ENCODE measurements at regions of chr2 and their contacts with region 1.

Region 1: GRCh38 chr2:148989882-148990493 is 48.5 kb upstream of the LYPD6B start:
- DNase-seq: peak; percentile 65
- H3K4me3 Mint-ChIP-seq: no peak overlapping the region
- H3K27ac Mint-ChIP-seq: no peak overlapping the region
- H3K4me1 Mint-ChIP-seq: peaks cover 5% of the 10 kb centered on the region
- H3K27me3 Mint-ChIP-seq: peaks cover 26% of the 10 kb centered on the region
- CTCF ChIP-seq: peak; percentile 52

Region 2: DNA sequence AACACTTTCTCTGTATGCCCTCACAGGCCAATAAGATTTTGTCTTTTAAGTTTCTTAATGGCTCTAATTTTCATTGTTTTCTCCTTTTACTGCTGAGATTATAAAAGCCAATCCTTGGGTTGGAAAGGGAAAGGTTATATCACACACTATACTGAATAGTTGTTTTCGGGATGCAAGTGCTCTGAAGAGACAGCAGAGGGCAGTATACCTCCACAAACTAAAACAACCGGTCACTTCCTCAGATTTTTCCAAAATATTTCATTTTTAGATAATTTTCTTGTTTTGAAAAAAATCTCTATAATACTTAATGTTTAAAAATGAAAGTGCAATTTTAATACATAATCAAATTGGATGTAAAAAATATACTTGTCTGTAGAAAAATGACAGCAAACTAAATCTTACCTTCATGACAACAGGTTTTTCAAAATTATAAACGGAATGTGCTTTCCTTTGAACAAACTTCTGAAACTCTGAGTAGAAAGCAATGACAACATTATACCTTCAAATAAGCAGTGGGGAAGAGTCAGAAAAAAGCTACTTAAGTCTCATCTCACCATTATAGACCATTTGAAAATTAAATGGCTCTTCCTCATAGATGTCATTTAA is 1052.1 kb before region 1 on chr2:
- CTCF ChIA-PET with region 1: no interaction called
- intact Hi-C with region 1: loop called (anchors 2 kb)
- DNase-seq: no peak
- H3K4me3 Mint-ChIP-seq: no peak overlapping the region
- H3K27ac Mint-ChIP-seq: no peak overlapping the region
- H3K4me1 Mint-ChIP-seq: no peaks in the 10 kb centered on the region
- H3K27me3 Mint-ChIP-seq: no peaks in the 10 kb centered on the region
- CTCF ChIP-seq: peak; percentile 80

Region 3: DNA sequence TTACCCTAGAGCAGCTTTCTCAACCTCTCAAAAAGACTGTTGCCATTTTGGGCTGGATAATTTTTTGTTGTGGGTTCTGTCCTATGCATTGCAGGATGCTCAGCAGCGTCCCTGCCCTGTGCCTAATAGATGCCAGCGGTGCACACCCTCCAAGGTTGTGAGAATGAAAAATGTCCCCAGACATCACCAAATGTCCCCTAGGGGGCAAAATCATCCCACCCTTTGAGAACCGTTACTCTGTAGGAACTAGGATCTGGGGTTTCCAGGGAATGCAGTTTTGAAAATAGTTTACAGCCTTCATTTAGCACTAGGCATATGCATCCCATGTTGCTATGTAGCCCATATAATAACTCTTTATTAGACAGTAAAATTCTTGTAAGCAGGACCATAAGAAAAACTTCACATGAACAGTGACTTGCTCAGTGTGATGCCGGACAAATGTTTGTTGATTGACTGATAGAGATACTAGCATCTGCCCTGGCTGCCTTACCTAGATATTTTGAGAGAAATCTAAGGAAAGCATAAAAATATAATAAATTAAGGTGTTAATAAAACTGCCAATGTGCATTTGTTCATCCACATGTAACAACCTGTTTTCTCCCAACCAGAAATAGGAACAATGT is 424.6 kb before region 1 on chr2:
- CTCF ChIA-PET with region 1: no interaction called
- intact Hi-C with region 1: loop called (anchors 1 kb)
- DNase-seq: peak; percentile 11
- H3K4me3 Mint-ChIP-seq: no peak overlapping the region
- H3K27ac Mint-ChIP-seq: no peak overlapping the region
- H3K4me1 Mint-ChIP-seq: no peaks in the 10 kb centered on the region
- H3K27me3 Mint-ChIP-seq: peaks cover 57% of the 10 kb centered on the region
- CTCF ChIP-seq: no peak

Region 4: GRCh38 chr2:148644883-148645538 is 345.0 kb before region 1 on chr2:
- CTCF ChIA-PET with region 1: no interaction called
- intact Hi-C with region 1: loop called (anchors 10 kb)
- DNase-seq: peak; percentile 88
- H3K4me3 Mint-ChIP-seq: peak overlapping the region; percentile 75
- H3K27ac Mint-ChIP-seq: peak overlapping the region; percentile 55
- H3K4me1 Mint-ChIP-seq: peaks cover 24% of the 10 kb centered on the region
- H3K27me3 Mint-ChIP-seq: no peaks in the 10 kb centered on the region
- CTCF ChIP-seq: no peak

Region 5: GRCh38 chr2:149040451-149040850 is 50.5 kb after region 1 on chr2:
- CTCF ChIA-PET with region 1: no interaction called
- intact Hi-C with region 1: no loop called
- DNase-seq: peak; percentile 47
- H3K4me3 Mint-ChIP-seq: no peak overlapping the region
- H3K27ac Mint-ChIP-seq: no peak overlapping the region
- H3K4me1 Mint-ChIP-seq: no peaks in the 10 kb centered on the region
- H3K27me3 Mint-ChIP-seq: peaks cover 13% of the 10 kb centered on the region
- CTCF ChIP-seq: peak; percentile 21

Region 6: GRCh38 chr2:149129433-149129832 is 139.4 kb after region 1 on chr2:
- CTCF ChIA-PET with region 1: no interaction called
- intact Hi-C with region 1: no loop called
- DNase-seq: no peak
- H3K4me3 Mint-ChIP-seq: no peak overlapping the region
- H3K27ac Mint-ChIP-seq: no peak overlapping the region
- H3K4me1 Mint-ChIP-seq: peaks cover 11% of the 10 kb centered on the region
- H3K27me3 Mint-ChIP-seq: no peaks in the 10 kb centered on the region
- CTCF ChIP-seq: no peak

Region 7: GRCh38 chr2:149145314-149146295 is 155.6 kb after region 1 on chr2:
- CTCF ChIA-PET with region 1: no interaction called
- intact Hi-C with region 1: no loop called
- DNase-seq: no peak
- H3K4me3 Mint-ChIP-seq: no peak overlapping the region
- H3K27ac Mint-ChIP-seq: no peak overlapping the region
- H3K4me1 Mint-ChIP-seq: no peaks in the 10 kb centered on the region
- H3K27me3 Mint-ChIP-seq: peaks cover 33% of the 10 kb centered on the region
- CTCF ChIP-seq: no peak